Heart left ventricle (tissue), 16 donors: ENCODE measurements at regions of chr3 and their contacts with region 1.

Region 1: GRCh38 chr3:50365080-50365841 is 5.9 kb upstream of the TMEM115 start:
- DNase-seq: peak; percentile 82 to 93 (median 85)
- ATAC-seq: peak; percentile 44 to 89 (median 84)
- H3K4me3 ChIP-seq: peak overlapping the region; percentile 1 to 66 (median 57)
- H3K27ac ChIP-seq: peak overlapping the region in 5 of 12 donors; percentile 9 to 73 (median 44)
- H3K4me1 ChIP-seq: peaks cover 0 to 14% (median 8%) of the 10 kb centered on the region in 12 donors
- H3K27me3 ChIP-seq: no peaks in the 10 kb centered on the region
- CTCF ChIP-seq: no peak
- POLR2A ChIP-seq: no peak

Region 2: GRCh38 chr3:50205414-50206276 is 159.6 kb before region 1 on chr3:
- intact Hi-C with region 1: no loop called
- DNase-seq: peak in 3 of 5 donors; percentile 68 to 76 (median 72)
- ATAC-seq: peak; percentile 50 to 76 (median 70)
- H3K4me3 ChIP-seq: peak overlapping the region; percentile 44 to 68 (median 54)
- H3K27ac ChIP-seq: peak overlapping the region in 11 of 12 donors; percentile 0 to 82 (median 72)
- H3K4me1 ChIP-seq: peaks cover 0 to 28% (median 12%) of the 10 kb centered on the region in 12 donors
- H3K27me3 ChIP-seq: peaks cover 0 to 55% (median 15%) of the 10 kb centered on the region in 9 donors
- CTCF ChIP-seq: no peak
- POLR2A ChIP-seq: peak in 1 of 2 donors; percentile 32

Region 3: GRCh38 chr3:50536471-50537180 is 171.4 kb after region 1 on chr3:
- intact Hi-C with region 1: loop called in 3 of 10 experiments (anchors 5 kb)
- DNase-seq: no peak
- ATAC-seq: peak in 1 of 4 donors; percentile 8
- H3K4me3 ChIP-seq: no peak overlapping the region
- H3K27ac ChIP-seq: no peak overlapping the region
- H3K4me1 ChIP-seq: peaks cover 0 to 5% (median 0%) of the 10 kb centered on the region in 12 donors
- H3K27me3 ChIP-seq: no peaks in the 10 kb centered on the region
- CTCF ChIP-seq: no peak
- POLR2A ChIP-seq: no peak

Region 4: DNA sequence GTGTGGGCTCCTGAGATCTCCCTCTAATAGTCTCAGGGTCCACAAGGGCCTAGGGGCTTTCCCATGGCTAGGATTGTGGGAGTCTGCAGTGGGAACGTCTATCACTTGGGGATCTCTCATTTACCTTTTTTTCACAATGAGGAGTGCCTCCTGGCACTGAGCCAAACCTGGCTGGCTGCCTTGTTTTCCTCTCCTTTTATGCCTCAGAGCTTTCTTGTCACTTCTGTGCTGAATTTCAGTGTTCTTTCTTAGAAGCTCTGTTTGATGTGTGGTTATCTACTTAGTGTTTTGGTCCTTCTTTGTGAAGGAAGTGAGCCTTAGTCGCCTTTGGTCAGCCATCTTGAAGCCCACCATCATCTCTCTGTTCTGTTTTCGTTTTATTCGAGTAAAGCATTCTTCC is 343.4 kb after region 1 on chr3:
- intact Hi-C with region 1: no loop called
- DNase-seq: no peak
- ATAC-seq: no peak
- H3K4me3 ChIP-seq: no peak overlapping the region
- H3K27ac ChIP-seq: no peak overlapping the region
- H3K4me1 ChIP-seq: peaks cover 0 to 10% (median 0%) of the 10 kb centered on the region in 12 donors
- H3K27me3 ChIP-seq: no peaks in the 10 kb centered on the region
- CTCF ChIP-seq: no peak
- POLR2A ChIP-seq: no peak